Activated CD8-positive, alpha-beta T cell treated with anti-CD3 and anti-CD28 coated beads for 36 hours (primary cell): ENCODE measurements at regions of chr22 and their contacts with region 1.

Region 1: DNA sequence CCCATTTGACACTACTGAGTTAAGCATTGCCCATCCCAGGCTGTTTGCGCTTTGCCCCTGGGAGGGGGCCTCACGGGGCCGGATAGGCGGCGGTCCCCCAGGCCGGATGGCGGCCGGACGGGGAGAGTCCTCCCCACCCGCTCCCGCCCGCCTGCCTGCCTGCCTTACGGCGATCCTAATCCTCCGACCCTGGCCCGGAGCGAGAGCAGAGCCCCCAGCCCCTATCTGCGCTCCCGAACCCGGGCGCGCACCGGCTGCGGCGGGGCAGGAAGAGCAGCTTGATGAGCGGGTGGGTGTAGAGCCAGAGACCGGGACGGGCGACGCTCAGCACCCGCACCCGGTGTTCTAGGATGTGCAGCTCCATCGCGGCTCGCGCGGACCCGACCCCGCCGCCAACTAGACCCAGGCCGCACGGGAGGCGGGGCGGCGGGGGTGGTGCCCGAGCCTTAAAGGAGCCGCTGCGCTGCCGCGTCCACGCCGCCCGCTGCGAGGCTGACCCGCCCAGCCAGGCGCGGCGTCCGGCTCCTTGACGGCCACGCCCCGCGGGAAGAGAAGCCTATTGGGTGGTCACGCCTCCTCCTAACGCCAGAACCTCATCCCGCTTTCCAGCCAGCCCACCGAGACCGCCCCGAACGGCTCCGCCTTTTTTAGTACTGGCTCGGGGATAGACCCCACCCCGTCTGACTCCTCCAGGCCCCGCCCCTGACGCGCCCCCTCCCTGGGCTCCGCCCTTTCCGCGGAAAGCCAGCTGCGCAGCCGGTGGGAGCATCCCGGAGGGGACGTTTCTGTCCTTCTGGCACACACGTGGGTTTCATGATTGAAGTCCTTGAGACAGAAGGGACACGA is at the start of gene CASTOR1:
- DNase-seq: peak; percentile 90
- ATAC-seq: peak; percentile 86
- H3K4me3 Mint-ChIP-seq: peak within 1 kb of the TSS; percentile 76
- H3K27ac Mint-ChIP-seq: peak within 1 kb of the TSS; percentile 76
- H3K4me1 Mint-ChIP-seq: peaks cover 22% of the 10 kb centered on the region
- H3K27me3 Mint-ChIP-seq: no peaks in the 10 kb centered on the region
- CTCF ChIP-seq: no peak
- total RNA-seq, gene CASTOR1: 4.2 to 5.1 TPM

Region 2: GRCh38 chr22:30116362-30117117 is 172.8 kb before region 1 on chr22:
- CTCF ChIA-PET with region 1: interaction called, 17 read pairs
- POLR2A ChIA-PET with region 1: no interaction called
- intact Hi-C with region 1: no loop called
- DNase-seq: no peak
- ATAC-seq: peak; percentile 74
- H3K4me3 Mint-ChIP-seq: no peak overlapping the region
- H3K27ac Mint-ChIP-seq: no peak overlapping the region
- H3K4me1 Mint-ChIP-seq: peaks cover 13% of the 10 kb centered on the region
- H3K27me3 Mint-ChIP-seq: peaks cover 6% of the 10 kb centered on the region
- CTCF ChIP-seq: no peak

Region 3: DNA sequence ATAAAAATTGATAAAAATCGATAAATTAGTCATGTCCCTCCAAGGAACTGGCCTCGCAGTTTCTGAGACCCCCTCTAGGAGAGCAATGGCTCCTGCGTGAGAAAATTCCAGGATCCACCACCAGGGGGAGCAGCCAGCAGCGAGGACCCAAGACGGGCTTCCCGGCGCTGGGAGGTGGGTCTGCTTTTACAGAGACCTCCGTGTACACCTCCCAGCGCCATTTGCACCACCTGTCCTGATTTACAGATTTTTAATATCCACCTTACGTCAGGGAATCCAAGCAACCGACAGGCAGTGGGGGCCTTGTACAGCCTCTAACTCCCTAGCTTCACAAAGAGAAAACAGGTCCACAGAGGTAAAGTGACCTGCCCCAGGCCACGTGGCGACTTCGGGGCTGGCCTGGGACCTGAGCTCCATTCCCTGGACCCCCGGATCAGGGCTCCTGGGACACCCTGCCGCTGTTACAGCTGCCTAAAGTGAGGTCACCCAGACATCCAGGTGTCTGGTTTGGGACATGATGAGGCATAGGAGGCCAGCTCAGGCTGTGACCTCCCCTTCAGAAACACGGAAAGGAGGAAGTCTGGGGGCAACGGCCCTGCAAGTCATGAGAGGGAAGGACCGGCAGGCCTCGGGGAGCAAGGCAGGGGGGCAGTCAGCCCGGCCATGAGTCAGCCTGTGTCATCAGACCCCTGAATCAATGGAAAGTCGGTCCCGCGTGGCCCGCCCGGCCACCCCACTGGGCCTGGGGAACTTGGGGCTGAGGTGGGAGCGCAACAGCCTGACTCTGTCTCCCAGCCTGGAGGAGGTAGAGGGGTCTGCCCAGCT is 26.2 kb before region 1 on chr22:
- CTCF ChIA-PET with region 1: interaction called, 45 read pairs
- POLR2A ChIA-PET with region 1: interaction called, 6 read pairs
- intact Hi-C with region 1: loop called (anchors 1 kb)
- DNase-seq: peak; percentile 88
- ATAC-seq: no peak
- H3K4me3 Mint-ChIP-seq: peak overlapping the region; percentile 95
- H3K27ac Mint-ChIP-seq: peak overlapping the region; percentile 83
- H3K4me1 Mint-ChIP-seq: peaks cover 31% of the 10 kb centered on the region
- H3K27me3 Mint-ChIP-seq: no peaks in the 10 kb centered on the region
- CTCF ChIP-seq: peak; percentile 100

Region 4: GRCh38 chr22:30310881-30311771 is 21.8 kb after region 1 on chr22:
- CTCF ChIA-PET with region 1: interaction called, 81 read pairs
- POLR2A ChIA-PET with region 1: interaction called, 7 read pairs
- intact Hi-C with region 1: no loop called
- DNase-seq: no peak
- ATAC-seq: no peak
- H3K4me3 Mint-ChIP-seq: no peak overlapping the region
- H3K27ac Mint-ChIP-seq: peak overlapping the region; percentile 85
- H3K4me1 Mint-ChIP-seq: peaks cover 91% of the 10 kb centered on the region
- H3K27me3 Mint-ChIP-seq: no peaks in the 10 kb centered on the region
- CTCF ChIP-seq: no peak

Region 5: DNA sequence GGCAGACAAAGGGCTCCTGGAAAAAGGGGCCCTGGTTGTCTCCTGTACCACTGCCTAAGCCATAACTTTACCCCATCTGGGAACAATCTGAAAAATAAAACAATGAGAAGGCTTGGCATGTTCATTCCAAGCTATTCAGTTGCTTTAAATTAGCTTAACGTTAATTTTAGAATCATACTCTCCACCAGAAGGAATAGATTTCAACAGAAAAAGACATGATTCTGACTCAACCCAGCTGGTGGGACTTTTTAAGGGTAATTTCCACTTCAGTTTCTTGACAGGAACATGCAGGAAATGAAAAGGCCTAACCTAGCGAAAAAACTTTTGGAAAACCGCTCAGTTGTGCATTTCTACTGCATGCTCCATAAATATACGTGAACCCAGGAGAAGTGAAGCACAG is 59.5 kb after region 1 on chr22:
- CTCF ChIA-PET with region 1: interaction called, 17 read pairs
- POLR2A ChIA-PET with region 1: interaction called, 12 read pairs
- intact Hi-C with region 1: no loop called
- DNase-seq: no peak
- ATAC-seq: no peak
- H3K4me3 Mint-ChIP-seq: no peak overlapping the region
- H3K27ac Mint-ChIP-seq: peak overlapping the region; percentile 86
- H3K4me1 Mint-ChIP-seq: peaks cover 57% of the 10 kb centered on the region
- H3K27me3 Mint-ChIP-seq: no peaks in the 10 kb centered on the region
- CTCF ChIP-seq: no peak

Region 6: GRCh38 chr22:30386960-30387827 is 97.8 kb after region 1 on chr22 and contains the start of gene RNF215:
- CTCF ChIA-PET with region 1: interaction called, 472 read pairs
- POLR2A ChIA-PET with region 1: interaction called, 19 read pairs
- intact Hi-C with region 1: loop called (anchors 2 kb)
- DNase-seq: peak; percentile 78
- ATAC-seq: peak; percentile 78
- H3K4me3 Mint-ChIP-seq: peak within 1 kb of the TSS; percentile 76
- H3K27ac Mint-ChIP-seq: peak within 1 kb of the TSS; percentile 43
- H3K4me1 Mint-ChIP-seq: peaks cover 15% of the 10 kb centered on the region
- H3K27me3 Mint-ChIP-seq: no peaks in the 10 kb centered on the region
- CTCF ChIP-seq: peak; percentile 89
- total RNA-seq, gene RNF215: 7.1 to 7.2 TPM

Region 7: GRCh38 chr22:30444632-30445437 is 155.5 kb after region 1 on chr22:
- CTCF ChIA-PET with region 1: interaction called, 11 read pairs
- POLR2A ChIA-PET with region 1: no interaction called
- intact Hi-C with region 1: no loop called
- DNase-seq: peak; percentile 80
- ATAC-seq: peak; percentile 85
- H3K4me3 Mint-ChIP-seq: no peak overlapping the region
- H3K27ac Mint-ChIP-seq: peak overlapping the region; percentile 27
- H3K4me1 Mint-ChIP-seq: peaks cover 21% of the 10 kb centered on the region
- H3K27me3 Mint-ChIP-seq: peaks cover 37% of the 10 kb centered on the region
- CTCF ChIP-seq: peak; percentile 80